Left ventricle myocardium inferior (tissue), 1 donor: ENCODE measurements at regions of chr2 and their contacts with region 1.

Region 1: DNA sequence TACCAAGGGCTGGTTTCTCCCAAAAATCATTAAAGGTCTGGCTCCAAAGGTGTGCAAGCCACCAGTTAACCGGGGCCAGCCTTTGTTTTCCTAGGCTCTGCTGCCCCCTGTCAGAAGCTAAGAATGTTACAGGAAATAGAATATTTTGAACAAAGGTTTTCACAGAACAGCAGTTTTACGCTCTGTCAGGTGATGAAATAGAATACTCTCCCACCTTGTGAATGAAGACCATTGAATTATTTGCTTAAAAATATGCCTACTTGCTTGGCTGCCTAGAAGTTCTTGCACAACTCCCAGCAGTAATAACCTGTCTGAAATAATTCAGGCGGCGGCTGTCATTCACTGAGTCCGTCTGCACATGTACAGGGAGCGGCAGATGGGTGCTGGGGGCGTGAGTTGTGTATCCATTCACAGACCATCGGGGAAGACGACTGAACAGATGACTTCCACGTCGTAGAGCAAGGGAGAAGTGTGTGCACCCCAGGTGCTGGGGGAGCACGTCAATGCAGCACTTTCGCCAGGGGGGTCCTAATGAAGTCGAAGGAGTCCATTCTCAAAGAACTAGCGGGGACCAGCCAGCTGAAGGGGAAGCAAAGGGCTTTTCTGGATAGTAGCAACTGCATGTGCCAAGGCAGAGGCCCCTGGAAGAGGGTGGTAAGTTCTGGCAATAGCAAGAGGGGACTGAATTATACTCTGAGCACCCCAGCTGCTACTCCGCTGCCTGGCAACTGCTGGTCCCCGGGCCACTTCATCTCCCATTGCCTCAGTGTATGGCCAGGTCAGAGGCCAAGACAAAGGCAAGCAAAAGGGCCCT is 56.1 kb downstream of the SF3B1 start:
- DNase-seq: no peak
- H3K4me3 ChIP-seq: no peak overlapping the region
- H3K27ac ChIP-seq: no peak overlapping the region
- H3K4me1 ChIP-seq: no peaks in the 10 kb centered on the region
- H3K27me3 ChIP-seq: no peaks in the 10 kb centered on the region
- CTCF ChIP-seq: peak; percentile 78

Region 2: GRCh38 chr2:197011799-197012641 is 366.7 kb before region 1 on chr2:
- intact Hi-C with region 1: loop called (anchors 5 kb)
- DNase-seq: no peak
- H3K4me3 ChIP-seq: no peak overlapping the region
- H3K27ac ChIP-seq: no peak overlapping the region
- H3K4me1 ChIP-seq: peaks cover 10% of the 10 kb centered on the region
- H3K27me3 ChIP-seq: no peaks in the 10 kb centered on the region
- CTCF ChIP-seq: peak; percentile 92

Region 3: DNA sequence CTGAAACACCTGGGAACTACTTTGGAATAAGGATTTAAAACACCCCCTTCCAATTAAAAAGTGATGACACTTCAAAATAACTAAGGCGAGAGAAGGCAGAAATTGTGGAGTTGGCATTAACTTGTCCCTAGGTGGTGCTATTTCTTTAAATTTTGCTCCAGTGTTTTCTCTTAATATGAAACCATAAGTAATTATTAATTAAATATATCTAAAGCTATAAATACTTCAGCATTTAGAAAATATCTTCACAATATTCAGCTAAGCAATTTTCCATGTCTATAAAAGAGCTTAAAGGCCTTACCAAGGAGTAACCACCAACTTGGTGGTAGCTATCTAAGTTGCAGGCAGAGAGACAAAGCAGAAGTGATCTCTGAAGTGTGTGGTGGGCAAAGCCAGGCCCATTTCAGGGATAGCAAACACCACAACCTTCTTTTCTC is 265.4 kb before region 1 on chr2:
- intact Hi-C with region 1: loop called (anchors 5 kb)
- DNase-seq: no peak
- H3K4me3 ChIP-seq: no peak overlapping the region
- H3K27ac ChIP-seq: no peak overlapping the region
- H3K4me1 ChIP-seq: peaks cover 14% of the 10 kb centered on the region
- H3K27me3 ChIP-seq: no peaks in the 10 kb centered on the region
- CTCF ChIP-seq: peak; percentile 76

Region 4: GRCh38 chr2:197191177-197191939 is 187.3 kb before region 1 on chr2:
- intact Hi-C with region 1: loop called (anchors 10 kb)
- DNase-seq: no peak
- H3K4me3 ChIP-seq: no peak overlapping the region
- H3K27ac ChIP-seq: no peak overlapping the region
- H3K4me1 ChIP-seq: peaks cover 19% of the 10 kb centered on the region
- H3K27me3 ChIP-seq: no peaks in the 10 kb centered on the region
- CTCF ChIP-seq: peak; percentile 74